Heart right ventricle (tissue), 16 donors: ENCODE measurements at regions of chr5 and their contacts with region 1.

Region 1: GRCh38 chr5:145681686-145682085 is 153.5 kb downstream of the PRELID2 start:
- DNase-seq: peak in 1 of 2 donors; percentile 46
- ATAC-seq: peak; percentile 57 to 90 (median 84)
- H3K4me3 ChIP-seq: no peak overlapping the region
- H3K27ac ChIP-seq: no peak overlapping the region
- H3K4me1 ChIP-seq: peaks cover 0 to 9% (median 4%) of the 10 kb centered on the region in 9 donors
- H3K27me3 ChIP-seq: no peaks in the 10 kb centered on the region
- CTCF ChIP-seq: peak; percentile 45 to 80 (median 69)

Region 2: GRCh38 chr5:145536133-145536532 is 145.6 kb before region 1 on chr5:
- intact Hi-C with region 1: no loop called
- DNase-seq: no peak
- ATAC-seq: no peak
- H3K4me3 ChIP-seq: no peak overlapping the region
- H3K27ac ChIP-seq: no peak overlapping the region
- H3K4me1 ChIP-seq: peaks cover 0 to 6% (median 0%) of the 10 kb centered on the region in 9 donors
- H3K27me3 ChIP-seq: no peaks in the 10 kb centered on the region
- CTCF ChIP-seq: no peak

Region 3: GRCh38 chr5:145711417-145711816 is 29.7 kb after region 1 on chr5:
- intact Hi-C with region 1: no loop called
- DNase-seq: no peak
- ATAC-seq: no peak
- H3K4me3 ChIP-seq: no peak overlapping the region
- H3K27ac ChIP-seq: no peak overlapping the region
- H3K4me1 ChIP-seq: no peaks in the 10 kb centered on the region
- H3K27me3 ChIP-seq: no peaks in the 10 kb centered on the region
- CTCF ChIP-seq: no peak

Region 4: DNA sequence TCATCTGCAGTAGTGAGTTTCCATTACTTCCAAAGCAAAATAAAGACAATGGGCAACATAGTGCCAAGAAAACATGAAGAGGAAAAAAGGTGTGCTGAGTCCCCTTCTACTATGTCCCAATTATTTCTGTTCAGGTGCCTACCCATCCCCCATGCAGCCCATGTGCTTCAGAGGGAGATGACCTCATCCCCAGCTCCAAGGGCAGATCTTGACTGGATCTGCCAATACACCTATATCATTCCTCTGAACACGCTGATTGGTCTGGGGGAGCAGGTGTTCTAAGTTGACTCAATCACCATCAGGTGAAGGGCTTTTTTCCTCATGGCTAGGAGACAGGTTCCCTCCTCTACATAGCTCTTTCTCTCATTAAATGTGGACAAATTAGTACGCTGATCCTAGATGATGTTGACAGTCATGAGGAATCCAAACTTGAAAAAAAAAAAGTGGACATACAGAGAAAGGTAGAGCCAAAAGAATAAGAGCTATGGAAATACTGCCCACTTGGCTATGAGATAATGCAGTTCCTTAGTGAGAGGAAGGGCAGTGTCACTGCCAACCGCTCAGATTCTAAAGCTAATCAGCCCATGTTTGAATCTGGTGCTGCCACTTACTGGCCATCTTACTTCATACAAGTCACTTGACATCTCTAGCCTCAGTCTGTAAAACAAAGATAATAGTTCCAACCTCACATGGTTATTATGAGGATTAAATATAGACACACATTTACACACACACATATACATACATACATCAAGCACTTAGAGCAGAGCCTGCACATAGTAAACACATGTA is 130.3 kb after region 1 on chr5:
- intact Hi-C with region 1: loop called in 2 of 10 experiments (anchors 5 to 10 kb)
- DNase-seq: peak in 1 of 2 donors; percentile 12
- ATAC-seq: peak in 7 of 8 donors; percentile 49 to 91 (median 63)
- H3K4me3 ChIP-seq: no peak overlapping the region
- H3K27ac ChIP-seq: no peak overlapping the region
- H3K4me1 ChIP-seq: peaks cover 0 to 4% (median 0%) of the 10 kb centered on the region in 9 donors
- H3K27me3 ChIP-seq: no peaks in the 10 kb centered on the region
- CTCF ChIP-seq: peak in 6 of 9 donors; percentile 26 to 50 (median 40)

Region 5: DNA sequence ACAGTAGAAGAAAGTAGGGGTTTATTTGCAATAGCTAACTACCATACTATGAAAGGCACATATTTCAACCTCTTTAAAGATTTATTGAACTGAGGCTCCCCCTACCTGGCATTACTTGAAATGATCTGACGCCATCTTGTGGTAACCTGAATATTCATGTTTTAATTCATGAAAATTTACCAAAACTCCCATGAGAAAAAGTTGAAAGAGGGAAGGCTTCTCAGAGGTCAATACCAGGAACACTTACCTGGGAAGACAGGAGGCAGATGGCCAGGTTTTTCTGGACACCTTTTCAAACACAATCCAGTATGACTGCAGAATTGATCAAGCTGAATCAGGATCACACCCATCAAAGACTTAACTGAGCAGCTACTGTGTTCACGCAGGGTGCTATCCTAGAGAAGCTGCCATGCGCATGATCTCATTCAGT is 144.1 kb after region 1 on chr5:
- intact Hi-C with region 1: loop called in 6 of 10 experiments (anchors 5 to 10 kb)
- DNase-seq: no peak
- ATAC-seq: peak in 1 of 8 donors; percentile 41
- H3K4me3 ChIP-seq: no peak overlapping the region
- H3K27ac ChIP-seq: no peak overlapping the region
- H3K4me1 ChIP-seq: peaks cover 0 to 14% (median 10%) of the 10 kb centered on the region in 9 donors
- H3K27me3 ChIP-seq: no peaks in the 10 kb centered on the region
- CTCF ChIP-seq: peak; percentile 29 to 91 (median 80)

Region 6: DNA sequence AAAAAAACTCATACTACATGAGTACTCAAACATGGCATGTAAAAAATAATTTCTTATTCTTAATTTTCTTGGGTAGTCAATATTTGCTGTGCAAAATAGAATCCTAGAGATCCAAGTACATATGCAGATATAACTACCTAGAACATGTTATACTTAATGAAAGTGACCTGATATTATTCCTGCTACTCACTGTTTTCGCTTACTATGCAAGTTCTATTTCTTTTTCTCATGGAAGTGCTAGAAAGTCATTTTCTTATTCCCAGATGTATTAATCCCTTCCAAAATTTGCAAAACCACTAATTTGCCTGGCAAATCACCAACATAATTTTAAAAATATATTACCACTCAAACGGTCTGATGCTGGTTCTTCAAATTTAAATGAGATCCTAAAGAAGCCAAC is 442.9 kb after region 1 on chr5:
- intact Hi-C with region 1: loop called in 1 of 10 experiments (anchors 10 kb)
- DNase-seq: no peak
- ATAC-seq: no peak
- H3K4me3 ChIP-seq: no peak overlapping the region
- H3K27ac ChIP-seq: no peak overlapping the region
- H3K4me1 ChIP-seq: no peaks in the 10 kb centered on the region
- H3K27me3 ChIP-seq: no peaks in the 10 kb centered on the region
- CTCF ChIP-seq: no peak

Region 7: GRCh38 chr5:146130440-146131045 is 448.9 kb after region 1 on chr5:
- intact Hi-C with region 1: loop called in 2 of 10 experiments (anchors 10 kb)
- DNase-seq: no peak
- ATAC-seq: no peak
- H3K4me3 ChIP-seq: no peak overlapping the region
- H3K27ac ChIP-seq: no peak overlapping the region
- H3K4me1 ChIP-seq: no peaks in the 10 kb centered on the region
- H3K27me3 ChIP-seq: no peaks in the 10 kb centered on the region
- CTCF ChIP-seq: peak in 8 of 9 donors; percentile 34 to 78 (median 70)